ENCODE measurements at regions of chr2 and their contacts with region 1.

Region 1: DNA sequence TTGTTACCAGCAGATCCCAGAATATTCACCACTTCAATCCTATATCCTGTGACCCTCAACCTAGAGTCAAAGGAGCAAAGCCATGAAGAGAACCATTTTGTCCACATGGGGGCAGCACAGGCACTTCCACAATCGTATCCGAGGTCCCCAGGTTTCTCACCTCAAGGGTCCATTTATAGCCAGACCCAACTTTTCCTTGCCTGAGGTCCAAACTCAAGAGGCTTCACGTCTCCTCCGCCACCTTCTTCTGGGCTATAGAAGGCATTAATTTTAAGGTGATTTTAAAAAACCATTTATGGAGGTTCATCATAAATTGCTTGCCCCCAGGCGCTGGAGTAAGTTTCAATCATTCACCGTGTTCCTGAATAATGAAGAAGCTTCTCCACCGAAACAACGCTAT is 111.6 kb upstream of the NABP1 start:
- DNase-seq: peak; percentile 81
- H3K4me3 ChIP-seq: no peak overlapping the region
- H3K27ac ChIP-seq: no peak overlapping the region
- H3K4me1 ChIP-seq: peaks cover 11% of the 10 kb centered on the region
- H3K27me3 ChIP-seq: no peaks in the 10 kb centered on the region
- CTCF ChIP-seq: peak; percentile 89

Region 2: GRCh38 chr2:191677646-191678436 is 111.5 kb after region 1 on chr2 and contains the start of gene NABP1:
- CTCF ChIA-PET with region 1: no interaction called
- POLR2A ChIA-PET with region 1: interaction called, 6 read pairs
- intact Hi-C with region 1: loop called (anchors 2 kb)
- DNase-seq: peak; percentile 98
- H3K4me3 ChIP-seq: peak within 1 kb of the TSS; percentile 80
- H3K27ac ChIP-seq: peak within 1 kb of the TSS; percentile 91
- H3K4me1 ChIP-seq: peaks cover 48% of the 10 kb centered on the region
- H3K27me3 ChIP-seq: no peaks in the 10 kb centered on the region
- CTCF ChIP-seq: no peak
- total RNA-seq, gene NABP1: 33.2 and 38.4 TPM in 2 replicates

Region 3: GRCh38 chr2:191691016-191691735 is 124.8 kb after region 1 on chr2:
- CTCF ChIA-PET with region 1: interaction called, 10 read pairs
- POLR2A ChIA-PET with region 1: no interaction called
- intact Hi-C with region 1: loop called (anchors 1 kb)
- DNase-seq: peak; percentile 86
- H3K4me3 ChIP-seq: no peak overlapping the region
- H3K27ac ChIP-seq: no peak overlapping the region
- H3K4me1 ChIP-seq: peaks cover 16% of the 10 kb centered on the region
- H3K27me3 ChIP-seq: no peaks in the 10 kb centered on the region
- CTCF ChIP-seq: peak; percentile 87

Region 4: DNA sequence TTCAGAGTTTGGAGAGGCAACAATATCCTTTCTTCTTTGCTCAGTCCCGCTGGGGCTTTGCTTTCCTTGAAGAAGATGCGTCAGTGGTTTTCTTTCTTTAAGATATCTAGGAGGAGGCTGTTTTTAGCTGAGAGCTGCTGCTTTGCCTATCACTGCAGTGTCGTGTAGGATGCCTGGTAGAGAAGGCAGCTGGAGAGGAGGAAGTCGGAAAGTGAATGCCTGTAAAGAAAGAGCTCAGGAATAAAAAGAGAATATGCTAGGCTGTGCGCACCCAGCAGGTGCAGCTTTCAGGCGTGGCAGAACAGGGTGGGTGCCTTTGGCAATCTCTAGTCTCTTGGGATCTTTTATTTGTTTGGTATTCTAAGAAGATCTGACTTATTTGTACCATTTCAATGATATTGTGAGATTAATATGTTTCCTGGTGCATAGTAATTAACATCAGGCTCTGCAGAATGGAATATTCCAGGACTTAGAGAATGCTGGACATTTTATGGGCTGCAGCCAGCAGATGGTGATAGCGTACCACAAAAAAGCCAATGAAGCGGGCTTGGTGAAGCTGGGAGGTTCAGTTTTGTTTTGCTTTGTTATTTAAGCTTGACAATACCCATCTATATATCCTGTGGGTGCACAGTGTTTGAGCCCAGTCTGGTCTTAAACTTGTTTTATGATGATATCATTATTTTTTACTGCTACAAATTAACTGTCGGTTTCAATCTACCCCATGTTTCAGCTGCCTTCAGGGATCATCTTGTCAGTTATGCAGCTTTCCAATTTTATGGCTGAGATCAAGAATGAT is 245.7 kb after region 1 on chr2:
- CTCF ChIA-PET with region 1: interaction called, 3 read pairs
- POLR2A ChIA-PET with region 1: no interaction called
- intact Hi-C with region 1: loop called (anchors 5 kb)
- DNase-seq: peak; percentile 82
- H3K4me3 ChIP-seq: no peak overlapping the region
- H3K27ac ChIP-seq: no peak overlapping the region
- H3K4me1 ChIP-seq: peaks cover 3% of the 10 kb centered on the region
- H3K27me3 ChIP-seq: no peaks in the 10 kb centered on the region
- CTCF ChIP-seq: peak; percentile 91

Region 5: GRCh38 chr2:191869178-191869577 is 302.8 kb after region 1 on chr2:
- CTCF ChIA-PET with region 1: no interaction called
- POLR2A ChIA-PET with region 1: no interaction called
- intact Hi-C with region 1: loop called (anchors 10 kb)
- DNase-seq: peak; percentile 66
- H3K4me3 ChIP-seq: no peak overlapping the region
- H3K27ac ChIP-seq: no peak overlapping the region
- H3K4me1 ChIP-seq: peaks cover 18% of the 10 kb centered on the region
- H3K27me3 ChIP-seq: no peaks in the 10 kb centered on the region
- CTCF ChIP-seq: peak; percentile 63

Region 6: DNA sequence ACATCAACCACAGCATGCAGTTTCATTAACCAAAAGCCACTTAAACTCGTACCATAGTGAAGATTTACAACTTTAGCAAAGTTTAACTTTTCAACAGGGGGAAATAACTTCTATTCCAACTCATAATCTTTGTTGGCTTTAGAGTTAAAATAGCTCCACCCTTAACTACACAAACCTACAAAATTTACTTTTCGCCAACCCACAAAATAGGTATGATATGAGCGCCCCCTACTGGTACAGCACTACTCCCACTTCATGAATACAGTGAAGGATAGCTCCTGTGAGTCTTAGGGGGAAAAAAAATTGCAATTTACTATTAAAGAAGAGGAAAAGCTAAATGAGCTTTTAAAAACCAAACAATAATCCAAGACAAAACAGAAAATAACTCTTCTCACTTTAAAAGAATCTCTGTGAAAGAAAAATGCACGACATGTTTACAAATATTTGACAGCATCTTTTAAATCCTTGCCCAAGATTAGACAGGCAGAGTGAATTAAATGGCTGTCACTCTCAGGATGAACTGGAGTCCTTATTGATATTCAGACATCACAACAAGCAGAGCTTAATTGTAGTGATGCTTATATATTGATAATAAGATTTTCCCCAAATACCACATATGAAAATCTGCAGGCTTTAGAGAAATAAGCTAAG is 596.2 kb after region 1 on chr2:
- CTCF ChIA-PET with region 1: interaction called, 3 read pairs
- POLR2A ChIA-PET with region 1: no interaction called
- intact Hi-C with region 1: loop called (anchors 2 kb)
- DNase-seq: peak; percentile 87
- H3K4me3 ChIP-seq: no peak overlapping the region
- H3K27ac ChIP-seq: peak overlapping the region; percentile 18
- H3K4me1 ChIP-seq: peaks cover 20% of the 10 kb centered on the region
- H3K27me3 ChIP-seq: no peaks in the 10 kb centered on the region
- CTCF ChIP-seq: peak; percentile 96

Measured in A673 (cell line).